ENCODE measurements at regions of chr9 and their contacts with region 1.

Region 1: GRCh38 chr9:137605121-137606004 is at the start of gene ARRDC1:
- DNase-seq: peak; percentile 82
- ATAC-seq: peak; percentile 89
- H3K4me3 Mint-ChIP-seq: peak within 1 kb of the TSS; percentile 75
- H3K27ac Mint-ChIP-seq: no peak within 1 kb of the TSS
- H3K4me1 Mint-ChIP-seq: peaks cover 17% of the 10 kb centered on the region
- H3K27me3 Mint-ChIP-seq: no peaks in the 10 kb centered on the region
- CTCF ChIP-seq: no peak
- total RNA-seq, gene ARRDC1: 56.9 and 58.3 TPM in 2 replicates

Region 2: GRCh38 chr9:137459147-137459600 is 146.2 kb before region 1 on chr9 and contains the start of gene NSMF:
- CTCF ChIA-PET with region 1: no interaction called
- POLR2A ChIA-PET with region 1: no interaction called
- intact Hi-C with region 1: loop called (anchors 2 kb)
- DNase-seq: peak; percentile 98
- ATAC-seq: peak; percentile 76
- H3K4me3 Mint-ChIP-seq: peak within 1 kb of the TSS; percentile 73
- H3K27ac Mint-ChIP-seq: peak within 1 kb of the TSS; percentile 46
- H3K4me1 Mint-ChIP-seq: peaks cover 25% of the 10 kb centered on the region
- H3K27me3 Mint-ChIP-seq: no peaks in the 10 kb centered on the region
- CTCF ChIP-seq: no peak
- total RNA-seq, gene NSMF: 22.5 and 24.7 TPM in 2 replicates

Region 3: GRCh38 chr9:137534256-137535117 is 70.9 kb before region 1 on chr9:
- CTCF ChIA-PET with region 1: no interaction called
- POLR2A ChIA-PET with region 1: no interaction called
- intact Hi-C with region 1: no loop called
- DNase-seq: no peak
- ATAC-seq: peak; percentile 74
- H3K4me3 Mint-ChIP-seq: no peak overlapping the region
- H3K27ac Mint-ChIP-seq: peak overlapping the region; percentile 32
- H3K4me1 Mint-ChIP-seq: peaks cover 37% of the 10 kb centered on the region
- H3K27me3 Mint-ChIP-seq: no peaks in the 10 kb centered on the region
- CTCF ChIP-seq: no peak

Region 4: DNA sequence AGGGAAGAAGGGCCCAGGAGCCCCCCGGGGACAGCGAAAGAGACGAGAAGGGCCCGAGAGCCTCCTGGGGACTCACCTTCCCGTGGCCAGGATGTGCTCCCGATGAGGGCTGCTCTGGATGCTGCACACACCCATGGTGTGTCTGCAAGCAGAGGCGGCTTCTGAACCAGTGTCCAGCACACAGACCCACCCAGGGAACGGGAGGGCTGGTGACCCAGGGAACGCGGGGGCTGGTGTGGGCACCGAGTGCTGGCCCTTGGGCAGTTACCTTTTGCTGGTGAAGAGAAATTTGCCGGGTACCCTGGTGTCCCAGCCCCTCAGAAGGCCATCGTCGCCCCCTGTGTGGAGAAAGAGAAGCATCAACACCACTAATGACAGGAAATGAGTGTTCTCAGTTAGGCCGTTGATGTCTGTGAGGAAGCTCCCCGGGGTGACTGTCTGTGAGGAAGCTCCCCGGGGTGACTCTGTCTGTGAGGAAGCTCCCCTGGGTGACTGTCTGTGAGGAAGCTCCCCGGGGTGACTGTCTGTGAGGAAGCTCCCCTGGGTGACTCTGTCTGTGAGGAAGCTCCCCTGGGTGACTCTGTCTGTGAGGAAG is 40.4 kb before region 1 on chr9:
- CTCF ChIA-PET with region 1: no interaction called
- POLR2A ChIA-PET with region 1: no interaction called
- intact Hi-C with region 1: no loop called
- DNase-seq: no peak
- ATAC-seq: no peak
- H3K4me3 Mint-ChIP-seq: no peak overlapping the region
- H3K27ac Mint-ChIP-seq: peak overlapping the region; percentile 50
- H3K4me1 Mint-ChIP-seq: peaks cover 14% of the 10 kb centered on the region
- H3K27me3 Mint-ChIP-seq: no peaks in the 10 kb centered on the region
- CTCF ChIP-seq: no peak

Region 5: DNA sequence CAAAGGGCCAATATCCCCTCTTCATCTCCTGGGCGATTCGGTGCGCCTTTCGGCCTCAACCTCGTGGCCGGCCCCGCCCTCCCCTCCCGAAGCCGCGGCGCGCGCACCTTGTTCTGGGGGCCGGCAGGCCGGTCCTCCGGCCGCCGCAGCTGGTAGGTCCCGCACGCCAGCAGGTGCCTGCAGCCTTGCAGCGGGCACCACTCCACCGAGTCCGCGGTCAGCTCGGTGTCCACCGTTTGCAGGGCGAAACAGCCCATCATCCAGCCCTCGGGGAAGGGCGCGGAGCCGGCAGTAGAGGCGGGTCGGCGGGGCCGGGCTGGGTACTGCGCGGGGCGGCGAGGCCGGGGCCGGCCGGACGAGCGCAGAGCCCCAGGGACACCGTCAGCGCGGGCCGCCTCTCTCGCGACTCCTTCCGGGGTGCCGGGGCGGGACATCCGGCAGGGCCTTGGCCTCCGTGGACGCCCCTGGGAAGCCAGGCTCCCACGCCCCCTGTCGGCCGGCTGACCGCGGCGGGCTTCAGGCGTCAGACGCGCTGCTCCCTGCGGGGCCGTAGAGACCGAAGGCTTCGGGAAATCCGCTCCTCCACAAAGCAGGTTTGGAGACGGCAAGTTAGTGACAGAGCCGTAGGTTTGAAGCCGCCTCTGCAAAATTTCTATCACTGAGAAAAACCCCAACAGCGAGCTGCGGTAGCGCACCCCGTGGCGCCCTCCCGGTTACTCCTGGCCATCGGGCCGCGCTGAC is 26.7 kb before region 1 on chr9 and contains the start of gene DPH7:
- CTCF ChIA-PET with region 1: interaction called, 3 read pairs
- POLR2A ChIA-PET with region 1: interaction called, 7 read pairs
- intact Hi-C with region 1: loop called (anchors 1 kb)
- DNase-seq: peak; percentile 98
- ATAC-seq: peak; percentile 97
- H3K4me3 Mint-ChIP-seq: peak within 1 kb of the TSS; percentile 82
- H3K27ac Mint-ChIP-seq: peak within 1 kb of the TSS; percentile 35
- H3K4me1 Mint-ChIP-seq: peaks cover 41% of the 10 kb centered on the region
- H3K27me3 Mint-ChIP-seq: no peaks in the 10 kb centered on the region
- CTCF ChIP-seq: peak; percentile 59
- total RNA-seq, gene DPH7: 39.4 and 43.0 TPM in 2 replicates

Region 6: GRCh38 chr9:137590462-137591383 is 14.6 kb before region 1 on chr9 and contains the start of gene ZMYND19:
- CTCF ChIA-PET with region 1: no interaction called
- POLR2A ChIA-PET with region 1: interaction called, 11 read pairs
- intact Hi-C with region 1: loop called (anchors 1 kb)
- DNase-seq: peak; percentile 95
- ATAC-seq: peak; percentile 96
- H3K4me3 Mint-ChIP-seq: peak within 1 kb of the TSS; percentile 98
- H3K27ac Mint-ChIP-seq: peak within 1 kb of the TSS; percentile 92
- H3K4me1 Mint-ChIP-seq: peaks cover 6% of the 10 kb centered on the region
- H3K27me3 Mint-ChIP-seq: peaks cover 1% of the 10 kb centered on the region
- CTCF ChIP-seq: no peak
- total RNA-seq, gene ZMYND19: 21.9 and 25.1 TPM in 2 replicates

Region 7: DNA sequence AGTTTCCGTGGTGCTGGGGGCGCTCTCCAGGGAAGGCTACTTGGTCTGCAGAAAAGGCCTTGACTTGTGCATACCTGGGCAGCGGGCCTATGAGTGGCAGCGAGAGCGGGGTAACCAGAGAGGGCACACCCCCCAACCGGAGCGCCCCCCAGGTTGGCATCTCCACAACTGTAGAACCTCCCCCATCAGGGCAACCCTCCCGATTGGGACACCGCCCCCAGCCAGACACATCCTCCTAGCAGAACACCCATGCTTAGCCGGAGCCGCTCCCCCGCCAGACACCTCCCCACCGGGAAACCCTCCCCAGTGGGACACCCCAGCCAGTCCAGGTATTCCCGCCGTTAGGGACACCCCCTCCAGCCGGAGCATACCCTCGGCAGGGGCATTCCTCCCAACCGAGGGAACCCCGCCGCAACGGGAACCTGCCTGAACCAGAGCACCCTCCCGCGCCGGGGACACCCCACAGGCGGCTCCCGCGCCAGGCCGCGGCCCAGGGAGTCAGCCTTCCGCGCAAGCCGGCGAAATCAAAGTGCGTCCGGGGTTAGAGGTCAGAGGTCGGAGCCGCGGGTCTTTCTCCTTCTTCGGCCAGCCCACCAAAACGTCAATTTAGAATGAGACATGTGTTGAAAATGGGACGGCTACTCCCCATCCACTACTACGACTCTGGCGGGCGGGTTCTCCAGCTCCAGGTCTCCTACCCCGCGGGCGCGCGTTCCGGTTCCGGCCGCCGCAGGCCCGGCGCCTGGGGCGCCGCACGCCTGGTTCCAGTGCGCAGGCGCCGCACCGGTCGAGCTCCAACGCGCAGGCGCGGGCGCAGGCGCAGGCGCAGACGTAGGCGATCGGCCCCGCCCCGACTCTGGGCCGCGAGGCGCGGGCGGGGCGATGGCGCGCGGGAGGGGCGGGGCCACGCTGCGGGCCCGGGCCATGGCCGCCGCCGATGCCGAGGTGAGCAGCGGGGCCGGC is 13.0 kb after region 1 on chr9 and contains the start of gene EHMT1:
- CTCF ChIA-PET with region 1: no interaction called
- POLR2A ChIA-PET with region 1: interaction called, 29 read pairs
- intact Hi-C with region 1: loop called (anchors 1 kb)
- DNase-seq: peak; percentile 98
- ATAC-seq: peak; percentile 89
- H3K4me3 Mint-ChIP-seq: peak within 1 kb of the TSS; percentile 91
- H3K27ac Mint-ChIP-seq: peak within 1 kb of the TSS; percentile 92
- H3K4me1 Mint-ChIP-seq: peaks cover 45% of the 10 kb centered on the region
- H3K27me3 Mint-ChIP-seq: no peaks in the 10 kb centered on the region
- CTCF ChIP-seq: no peak
- total RNA-seq, gene EHMT1: 157 and 163 TPM in 2 replicates

Region 8: GRCh38 chr9:137647096-137647714 is 41.8 kb after region 1 on chr9:
- CTCF ChIA-PET with region 1: no interaction called
- POLR2A ChIA-PET with region 1: no interaction called
- intact Hi-C with region 1: no loop called
- DNase-seq: no peak
- ATAC-seq: peak; percentile 65
- H3K4me3 Mint-ChIP-seq: peak overlapping the region; percentile 73
- H3K27ac Mint-ChIP-seq: no peak overlapping the region
- H3K4me1 Mint-ChIP-seq: peaks cover 54% of the 10 kb centered on the region
- H3K27me3 Mint-ChIP-seq: no peaks in the 10 kb centered on the region
- CTCF ChIP-seq: no peak

Region 9: GRCh38 chr9:137745541-137745991 is 140.2 kb after region 1 on chr9:
- CTCF ChIA-PET with region 1: no interaction called
- POLR2A ChIA-PET with region 1: no interaction called
- intact Hi-C with region 1: no loop called
- DNase-seq: peak; percentile 65
- ATAC-seq: peak; percentile 95
- H3K4me3 Mint-ChIP-seq: peak overlapping the region; percentile 60
- H3K27ac Mint-ChIP-seq: peak overlapping the region; percentile 91
- H3K4me1 Mint-ChIP-seq: peaks cover 49% of the 10 kb centered on the region
- H3K27me3 Mint-ChIP-seq: no peaks in the 10 kb centered on the region
- CTCF ChIP-seq: no peak

Region 10: DNA sequence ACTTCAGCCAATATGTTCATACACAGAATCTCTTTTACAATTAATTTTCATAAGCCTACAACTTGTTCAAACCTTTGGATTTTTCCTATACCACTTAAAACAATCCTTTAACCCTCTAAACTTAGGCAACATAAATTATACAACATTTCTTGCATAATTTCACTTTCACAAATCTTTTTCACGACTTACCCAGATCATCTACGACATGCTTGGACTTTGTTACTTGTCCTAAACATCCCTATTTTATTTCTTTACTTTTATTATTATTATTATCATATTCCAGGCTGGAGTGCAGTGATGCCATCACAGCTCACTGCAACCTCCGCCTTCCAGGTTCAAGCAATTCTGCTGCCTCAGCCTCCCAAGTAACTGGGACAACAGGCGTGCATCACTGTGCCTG is 340.2 kb after region 1 on chr9:
- CTCF ChIA-PET with region 1: no interaction called
- POLR2A ChIA-PET with region 1: interaction called, 11 read pairs
- intact Hi-C with region 1: no loop called
- DNase-seq: no peak
- ATAC-seq: no peak
- H3K4me3 Mint-ChIP-seq: no peak overlapping the region
- H3K27ac Mint-ChIP-seq: no peak overlapping the region
- H3K4me1 Mint-ChIP-seq: no peaks in the 10 kb centered on the region
- H3K27me3 Mint-ChIP-seq: no peaks in the 10 kb centered on the region
- CTCF ChIP-seq: no peak

Measured in activated B cell treated with CpG ODN at 0.5 μM for 24 hours (primary cell).